Activated B cell treated with CpG ODN at 0.5 μM for 24 hours (primary cell): ENCODE measurements at regions of chr4 and their contacts with region 1.

Region 1: DNA sequence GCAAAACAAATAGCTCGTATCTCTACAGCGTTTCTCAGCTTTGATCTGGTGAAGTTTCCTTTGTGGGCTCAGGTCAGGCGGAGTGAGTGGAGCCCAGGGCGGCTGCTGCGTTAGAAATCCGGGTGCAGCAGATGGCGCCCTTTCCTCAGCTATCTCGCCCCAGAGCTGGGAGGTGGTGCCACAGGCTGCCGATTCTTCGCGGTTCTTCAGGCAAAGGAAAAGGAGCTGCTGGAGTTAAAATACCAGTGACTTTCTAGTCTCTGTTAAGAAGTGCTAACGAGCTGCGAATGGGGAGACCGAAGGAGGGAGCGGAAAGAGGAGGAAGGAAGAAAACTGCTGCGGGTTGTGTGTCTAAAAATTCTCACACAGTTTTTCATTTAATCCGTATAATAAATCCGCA is 114.6 kb downstream of the CPE start:
- DNase-seq: peak; percentile 29
- ATAC-seq: no peak
- H3K4me3 Mint-ChIP-seq: no peak overlapping the region
- H3K27ac Mint-ChIP-seq: no peak overlapping the region
- H3K4me1 Mint-ChIP-seq: peaks cover 6% of the 10 kb centered on the region
- H3K27me3 Mint-ChIP-seq: peaks cover 20% of the 10 kb centered on the region
- CTCF ChIP-seq: no peak

Region 2: GRCh38 chr4:166078955-166079354 is 585.6 kb after region 1 on chr4:
- CTCF ChIA-PET with region 1: no interaction called
- POLR2A ChIA-PET with region 1: no interaction called
- intact Hi-C with region 1: no loop called
- DNase-seq: no peak
- ATAC-seq: no peak
- H3K4me3 Mint-ChIP-seq: no peak overlapping the region
- H3K27ac Mint-ChIP-seq: no peak overlapping the region
- H3K4me1 Mint-ChIP-seq: no peaks in the 10 kb centered on the region
- H3K27me3 Mint-ChIP-seq: no peaks in the 10 kb centered on the region
- CTCF ChIP-seq: no peak

Region 3: GRCh38 chr4:166091912-166092510 is 598.7 kb after region 1 on chr4:
- CTCF ChIA-PET with region 1: interaction called, 17 read pairs
- POLR2A ChIA-PET with region 1: no interaction called
- intact Hi-C with region 1: loop called (anchors 1 kb)
- DNase-seq: no peak
- ATAC-seq: no peak
- H3K4me3 Mint-ChIP-seq: no peak overlapping the region
- H3K27ac Mint-ChIP-seq: no peak overlapping the region
- H3K4me1 Mint-ChIP-seq: no peaks in the 10 kb centered on the region
- H3K27me3 Mint-ChIP-seq: no peaks in the 10 kb centered on the region
- CTCF ChIP-seq: no peak